ENCODE measurements at regions of chr11 and their contacts with region 1.

Region 1: GRCh38 chr11:76721755-76722677 is 51.5 kb upstream of the LRRC32 start:
- DNase-seq: peak; percentile 90
- ATAC-seq: peak; percentile 99
- H3K4me3 Mint-ChIP-seq: no peak overlapping the region
- H3K27ac Mint-ChIP-seq: no peak overlapping the region
- H3K4me1 Mint-ChIP-seq: peaks cover 2% of the 10 kb centered on the region
- H3K27me3 Mint-ChIP-seq: peaks cover 14% of the 10 kb centered on the region
- CTCF ChIP-seq: peak; percentile 85

Region 2: GRCh38 chr11:76706672-76707071 is 15.3 kb before region 1 on chr11:
- CTCF ChIA-PET with region 1: interaction called, 13 read pairs
- POLR2A ChIA-PET with region 1: interaction called, 3 read pairs
- intact Hi-C with region 1: no loop called
- DNase-seq: no peak
- ATAC-seq: no peak
- H3K4me3 Mint-ChIP-seq: no peak overlapping the region
- H3K27ac Mint-ChIP-seq: no peak overlapping the region
- H3K4me1 Mint-ChIP-seq: no peaks in the 10 kb centered on the region
- H3K27me3 Mint-ChIP-seq: peaks cover 9% of the 10 kb centered on the region
- CTCF ChIP-seq: no peak

Region 3: GRCh38 chr11:76734456-76735420 is 12.7 kb after region 1 on chr11:
- CTCF ChIA-PET with region 1: interaction called, 10 read pairs
- POLR2A ChIA-PET with region 1: interaction called, 4 read pairs
- intact Hi-C with region 1: no loop called
- DNase-seq: no peak
- ATAC-seq: no peak
- H3K4me3 Mint-ChIP-seq: no peak overlapping the region
- H3K27ac Mint-ChIP-seq: no peak overlapping the region
- H3K4me1 Mint-ChIP-seq: no peaks in the 10 kb centered on the region
- H3K27me3 Mint-ChIP-seq: no peaks in the 10 kb centered on the region
- CTCF ChIP-seq: no peak

Region 4: DNA sequence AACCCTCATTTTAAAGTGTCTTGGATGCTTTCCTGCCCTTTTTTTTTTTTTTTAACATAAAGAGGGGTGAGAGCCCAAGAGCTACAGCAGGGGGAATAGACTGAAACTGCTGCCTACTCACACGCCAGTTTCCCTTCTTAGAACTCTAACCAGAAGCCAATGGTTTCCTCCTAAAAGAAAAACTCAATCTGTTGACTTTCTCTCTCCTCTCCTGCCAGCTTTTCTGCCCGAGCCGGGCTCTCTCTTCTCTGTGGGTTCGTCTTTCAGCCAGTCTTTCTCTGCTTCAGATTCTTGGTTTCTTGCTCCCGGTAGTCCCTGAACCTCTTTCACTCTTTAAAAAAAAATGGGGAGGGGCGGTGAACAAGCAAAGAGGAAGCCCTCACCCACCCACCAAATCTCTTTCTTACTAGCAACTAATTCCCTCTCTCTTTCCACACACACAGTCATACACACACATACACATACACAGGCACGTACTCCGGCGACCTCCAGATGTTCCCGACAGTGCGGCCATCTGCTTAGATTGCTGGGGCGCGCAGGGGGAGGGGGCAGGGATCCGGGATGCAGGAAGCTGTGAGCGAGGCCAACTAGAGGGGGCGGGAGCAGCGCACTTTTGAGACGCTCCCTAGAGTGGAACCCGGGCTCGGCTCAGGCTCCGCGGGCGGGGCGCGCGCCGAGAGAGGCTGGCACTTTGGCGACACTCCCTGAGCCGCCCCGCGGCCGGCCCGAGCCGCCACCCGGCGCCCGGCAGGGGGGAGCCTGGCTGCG is 60.7 kb after region 1 on chr11:
- CTCF ChIA-PET with region 1: interaction called, 12 read pairs
- POLR2A ChIA-PET with region 1: interaction called, 3 read pairs
- intact Hi-C with region 1: no loop called
- DNase-seq: peak; percentile 90
- ATAC-seq: peak; percentile 83
- H3K4me3 Mint-ChIP-seq: peak overlapping the region; percentile 70
- H3K27ac Mint-ChIP-seq: peak overlapping the region; percentile 88
- H3K4me1 Mint-ChIP-seq: peaks cover 19% of the 10 kb centered on the region
- H3K27me3 Mint-ChIP-seq: peaks cover 41% of the 10 kb centered on the region
- CTCF ChIP-seq: no peak

Region 5: GRCh38 chr11:76799066-76799804 is 77.2 kb after region 1 on chr11:
- CTCF ChIA-PET with region 1: interaction called, 238 read pairs
- POLR2A ChIA-PET with region 1: interaction called, 4 read pairs
- intact Hi-C with region 1: no loop called
- DNase-seq: peak; percentile 84
- ATAC-seq: peak; percentile 86
- H3K4me3 Mint-ChIP-seq: peak overlapping the region; percentile 15
- H3K27ac Mint-ChIP-seq: no peak overlapping the region
- H3K4me1 Mint-ChIP-seq: peaks cover 22% of the 10 kb centered on the region
- H3K27me3 Mint-ChIP-seq: no peaks in the 10 kb centered on the region
- CTCF ChIP-seq: peak; percentile 95